ENCODE measurements at regions of chr15 and their contacts with region 1.

Region 1: GRCh38 chr15:62138124-62138523 is 27.0 kb downstream of the C2CD4B start:
- DNase-seq: peak; percentile 94
- H3K4me3 ChIP-seq: no peak overlapping the region
- H3K27ac ChIP-seq: peak overlapping the region; percentile 72
- H3K4me1 ChIP-seq: peaks cover 39% of the 10 kb centered on the region
- H3K27me3 ChIP-seq: no peaks in the 10 kb centered on the region
- CTCF ChIP-seq: no peak
- POLR2A ChIP-seq: no peak

Region 2: DNA sequence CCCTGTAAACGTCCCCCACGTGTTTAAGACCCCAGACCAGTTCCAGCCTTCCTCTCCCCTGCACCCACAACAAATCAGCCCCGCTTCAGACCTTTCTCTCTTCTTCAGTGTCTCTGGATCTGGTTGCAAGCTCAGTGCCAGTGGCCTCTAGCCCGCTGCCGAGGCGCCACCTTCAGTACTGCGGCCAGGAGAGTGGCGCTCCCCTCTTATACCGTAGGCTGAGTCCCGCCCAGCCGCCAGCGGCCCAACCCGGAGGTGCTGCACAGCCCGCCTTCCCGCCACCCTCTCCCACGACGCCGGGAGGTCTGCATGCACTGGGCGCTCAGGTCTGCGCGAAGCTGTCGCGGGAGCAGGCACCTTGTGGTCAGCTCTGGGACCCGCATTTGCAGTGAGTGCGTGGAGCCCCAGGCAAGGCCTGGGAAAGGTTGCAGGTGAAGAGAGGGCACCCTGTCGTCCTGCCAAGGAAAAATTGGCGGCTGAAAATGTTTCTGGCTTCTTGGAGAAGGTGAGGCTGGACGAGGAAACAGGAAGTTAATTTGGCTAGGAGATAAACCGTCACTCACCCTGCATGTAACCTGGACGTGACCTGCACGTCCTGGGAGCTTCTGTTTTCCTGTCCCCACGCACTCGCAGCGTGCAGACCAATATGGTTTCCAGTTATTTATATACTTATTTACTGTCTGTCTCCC is 27.1 kb after region 1 on chr15 and contains the start of gene C2CD4B:
- CTCF ChIA-PET with region 1: interaction called, 6 read pairs
- POLR2A ChIA-PET with region 1: interaction called, 6 read pairs
- dilution Hi-C with region 1: no loop called
- intact Hi-C with region 1: loop called (anchors 1 kb)
- DNase-seq: peak; percentile 89
- H3K4me3 ChIP-seq: peak within 1 kb of the TSS; percentile 49 to 75 (median 66)
- H3K27ac ChIP-seq: peak within 1 kb of the TSS; percentile 78
- H3K4me1 ChIP-seq: peaks cover 31% of the 10 kb centered on the region
- H3K27me3 ChIP-seq: no peaks in the 10 kb centered on the region
- CTCF ChIP-seq: peak in 1 of 2 donors; percentile 19
- POLR2A ChIP-seq: peak; percentile 90
- total RNA-seq, gene C2CD4B: 28.4 and 31.7 TPM in 2 replicates

Region 3: DNA sequence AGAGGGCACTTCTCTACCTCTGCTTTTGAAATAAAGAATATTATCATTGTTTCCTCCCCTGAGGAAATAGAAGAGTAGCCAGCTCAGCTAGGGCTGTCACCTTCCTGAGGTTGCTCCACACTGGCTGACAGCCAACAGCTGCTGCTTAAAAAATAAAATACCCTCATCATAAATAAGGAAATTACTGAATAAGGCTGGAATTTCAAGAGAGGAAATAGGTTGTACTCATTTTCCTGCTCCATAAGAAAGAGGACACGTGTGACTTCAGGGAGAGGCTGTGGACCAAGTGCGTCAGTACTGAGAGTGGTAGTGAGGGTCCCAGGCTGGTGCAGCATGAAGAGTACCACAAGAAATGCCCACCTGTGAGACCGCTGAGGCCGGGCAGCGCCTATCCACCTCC is 35.1 kb after region 1 on chr15:
- CTCF ChIA-PET with region 1: interaction called, 6 read pairs
- POLR2A ChIA-PET with region 1: no interaction called
- dilution Hi-C with region 1: no loop called
- intact Hi-C with region 1: loop called (anchors 1 kb)
- DNase-seq: peak; percentile 97
- H3K4me3 ChIP-seq: peak overlapping the region in 2 of 3 experiments; percentile 10 to 68
- H3K27ac ChIP-seq: peak overlapping the region; percentile 100
- H3K4me1 ChIP-seq: peaks cover 42% of the 10 kb centered on the region
- H3K27me3 ChIP-seq: no peaks in the 10 kb centered on the region
- CTCF ChIP-seq: no peak
- POLR2A ChIP-seq: peak; percentile 51